ENCODE measurements at regions of chr5 and their contacts with region 1.

Region 1: DNA sequence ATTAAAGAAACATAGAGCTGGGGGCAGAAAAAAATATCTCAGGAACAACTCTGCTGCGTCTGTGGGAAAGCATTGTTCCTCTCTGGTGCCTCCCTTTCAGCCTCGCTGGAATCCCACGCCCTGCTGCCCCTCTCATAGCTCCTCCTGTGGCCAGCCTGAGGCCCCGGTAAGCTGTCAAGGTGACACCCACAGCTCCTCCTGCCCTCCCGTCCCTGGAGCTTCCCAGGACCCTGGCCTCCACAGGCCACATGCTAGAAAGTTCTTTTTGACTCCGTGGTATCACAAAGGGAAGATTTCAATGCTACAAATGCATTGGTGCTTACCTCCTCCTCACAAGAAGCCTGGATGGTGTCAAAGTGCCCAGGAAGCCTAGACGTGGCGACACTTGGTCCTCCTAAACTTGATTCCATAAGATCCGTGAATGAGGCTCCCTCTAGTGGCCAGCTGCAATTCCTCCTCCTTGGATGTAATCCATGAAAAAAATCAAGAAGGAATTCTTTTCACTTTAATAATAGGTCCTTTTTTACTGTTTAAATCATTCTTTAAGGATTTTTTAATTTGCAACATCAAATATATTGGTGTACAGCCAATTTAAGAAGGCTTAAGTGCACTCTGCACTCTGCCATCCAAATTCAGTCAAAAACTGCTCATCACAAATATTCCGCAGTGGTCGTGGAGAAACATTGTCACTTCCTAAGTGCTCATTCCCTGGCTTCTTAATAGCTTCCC is 104.9 kb downstream of the CFAP90 start:
- DNase-seq: peak; percentile 86
- H3K4me3 ChIP-seq: no peak overlapping the region
- H3K27ac ChIP-seq: no peak overlapping the region
- H3K4me1 ChIP-seq: peaks cover 0 to 6% (median 0%) of the 10 kb centered on the region in 4 donors
- H3K27me3 ChIP-seq: no peaks in the 10 kb centered on the region
- CTCF ChIP-seq: peak; percentile 52 to 89 (median 77)
- EP300 ChIP-seq: no peak
- POLR2A ChIP-seq: no peak

Region 2: GRCh38 chr5:6765612-6766525 is 980.2 kb before region 1 on chr5:
- intact Hi-C with region 1: loop called (anchors 5 kb)
- DNase-seq: peak; percentile 77
- H3K4me3 ChIP-seq: no peak overlapping the region
- H3K27ac ChIP-seq: peak overlapping the region; percentile 36 to 62 (median 58)
- H3K4me1 ChIP-seq: peaks cover 0 to 16% (median 14%) of the 10 kb centered on the region in 4 donors
- H3K27me3 ChIP-seq: no peaks in the 10 kb centered on the region
- CTCF ChIP-seq: peak in 3 of 4 experiments; percentile 44 to 77 (median 58)
- EP300 ChIP-seq: no peak
- POLR2A ChIP-seq: no peak

Region 3: DNA sequence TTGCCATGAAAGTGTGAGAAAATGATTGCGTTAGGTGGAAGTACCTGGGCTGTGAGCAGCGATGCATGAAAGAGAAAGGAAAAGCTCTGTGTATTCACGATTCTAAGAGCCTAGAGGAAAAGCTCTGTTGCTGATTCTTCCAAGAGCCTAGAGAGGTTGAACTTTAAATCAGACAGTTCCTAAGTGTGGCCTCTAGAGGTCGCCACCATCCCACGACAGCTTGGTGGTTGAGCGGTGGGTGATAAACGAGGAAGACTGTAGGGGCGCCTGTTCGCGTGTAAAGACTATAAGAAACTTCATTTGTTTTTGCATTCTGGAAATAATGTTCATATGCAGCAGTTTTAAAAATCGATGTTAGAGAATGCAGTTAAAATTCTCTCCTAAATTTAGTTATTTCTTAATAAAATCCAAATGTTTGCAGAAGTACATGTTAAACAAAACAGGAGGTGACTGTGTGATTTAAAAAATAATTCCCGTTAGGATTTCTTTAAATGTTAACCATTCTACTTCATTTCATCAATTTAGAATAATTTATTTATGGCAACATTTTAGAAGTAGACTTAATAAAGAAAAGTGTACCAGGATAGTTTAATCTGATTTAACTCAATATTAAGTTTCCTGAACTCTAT is 925.1 kb before region 1 on chr5:
- intact Hi-C with region 1: loop called (anchors 10 kb)
- DNase-seq: no peak
- H3K4me3 ChIP-seq: no peak overlapping the region
- H3K27ac ChIP-seq: no peak overlapping the region
- H3K4me1 ChIP-seq: no peaks in the 10 kb centered on the region
- H3K27me3 ChIP-seq: no peaks in the 10 kb centered on the region
- CTCF ChIP-seq: peak; percentile 18 to 61 (median 25)
- EP300 ChIP-seq: no peak
- POLR2A ChIP-seq: no peak

Region 4: DNA sequence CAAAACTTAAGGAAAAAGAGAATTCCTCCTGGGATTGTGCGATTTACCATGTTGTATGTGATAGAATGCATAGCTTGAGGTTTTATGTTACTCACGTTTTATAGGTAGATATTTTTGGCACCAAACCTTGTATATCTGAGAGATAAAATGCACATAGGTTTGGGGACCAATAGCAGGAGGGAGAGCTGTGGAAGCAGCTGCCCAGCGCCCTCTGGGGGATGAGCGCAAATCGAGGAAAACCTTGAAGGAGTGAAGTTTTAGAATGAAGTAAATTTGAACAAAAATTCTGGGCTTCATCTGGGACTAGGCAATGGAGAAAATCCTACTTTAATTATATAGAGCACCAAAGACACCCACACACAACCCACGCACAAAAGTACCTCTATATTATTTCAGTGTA is 153.1 kb before region 1 on chr5:
- intact Hi-C with region 1: loop called (anchors 10 kb)
- DNase-seq: no peak
- H3K4me3 ChIP-seq: no peak overlapping the region
- H3K27ac ChIP-seq: no peak overlapping the region
- H3K4me1 ChIP-seq: peaks cover 0 to 10% (median 2%) of the 10 kb centered on the region in 4 donors
- H3K27me3 ChIP-seq: no peaks in the 10 kb centered on the region
- CTCF ChIP-seq: peak in 3 of 4 experiments; percentile 11 to 21 (median 13)
- EP300 ChIP-seq: no peak
- POLR2A ChIP-seq: no peak

Region 5: DNA sequence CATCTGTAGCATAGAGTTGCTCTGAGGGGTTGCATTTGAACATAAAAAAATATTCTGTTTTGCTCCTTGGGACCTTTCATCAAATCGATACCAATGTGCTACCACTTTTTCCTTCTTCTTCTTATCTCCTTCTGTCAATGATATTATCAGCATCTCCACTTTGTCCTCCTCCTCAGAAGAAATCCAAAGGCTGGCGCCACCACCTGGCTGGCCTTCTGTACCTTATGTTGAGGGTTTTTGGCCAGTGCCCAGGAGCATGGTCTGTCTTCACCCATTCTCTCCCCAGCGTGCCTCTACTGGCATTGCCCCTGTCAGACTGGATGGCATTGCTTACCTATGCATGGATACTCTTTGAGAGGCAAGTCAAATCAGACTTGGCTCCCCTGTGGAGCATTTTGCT is 62.3 kb before region 1 on chr5:
- intact Hi-C with region 1: loop called (anchors 5 kb)
- DNase-seq: no peak
- H3K4me3 ChIP-seq: no peak overlapping the region
- H3K27ac ChIP-seq: no peak overlapping the region
- H3K4me1 ChIP-seq: peaks cover 0 to 35% (median 4%) of the 10 kb centered on the region in 4 donors
- H3K27me3 ChIP-seq: no peaks in the 10 kb centered on the region
- CTCF ChIP-seq: no peak
- EP300 ChIP-seq: no peak
- POLR2A ChIP-seq: no peak

Region 6: DNA sequence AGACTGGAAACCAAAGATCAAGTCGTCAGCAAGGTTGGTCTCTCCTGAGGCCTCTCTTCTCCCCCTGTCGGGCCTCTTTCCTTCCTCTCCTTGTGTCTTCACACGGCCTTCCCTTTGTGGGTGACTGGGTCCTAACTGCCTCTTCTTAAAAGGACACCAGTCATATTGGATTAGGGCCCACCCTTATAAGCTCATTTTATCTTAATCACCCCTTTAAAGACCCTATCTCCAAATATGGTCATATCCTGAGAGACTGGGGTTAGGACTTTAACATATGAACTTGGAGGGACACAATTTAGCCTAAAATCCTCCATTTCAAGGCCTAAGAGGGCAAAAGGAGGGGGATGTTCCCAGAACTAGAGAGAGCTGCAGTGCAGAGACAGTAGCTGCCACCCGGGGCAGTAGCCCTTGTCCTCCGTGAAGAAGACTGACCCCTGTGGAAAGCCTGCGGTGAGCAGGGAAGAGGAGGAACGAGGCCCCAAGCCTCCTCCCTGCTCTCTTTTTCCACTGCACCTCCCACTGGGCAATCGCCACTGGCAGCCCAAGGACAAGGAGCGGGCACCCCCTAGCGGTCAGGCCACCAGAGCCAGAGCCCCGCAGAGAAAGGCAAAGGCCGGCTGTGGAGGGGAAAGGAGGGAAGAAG is 70.0 kb after region 1 on chr5:
- intact Hi-C with region 1: loop called (anchors 5 kb)
- DNase-seq: peak; percentile 88
- H3K4me3 ChIP-seq: no peak overlapping the region
- H3K27ac ChIP-seq: no peak overlapping the region
- H3K4me1 ChIP-seq: peaks cover 0 to 10% (median 7%) of the 10 kb centered on the region in 4 donors
- H3K27me3 ChIP-seq: no peaks in the 10 kb centered on the region
- CTCF ChIP-seq: peak; percentile 17 to 77 (median 65)
- EP300 ChIP-seq: no peak
- POLR2A ChIP-seq: no peak